Activated CD8-positive, alpha-beta T cell treated with anti-CD3 and anti-CD28 coated beads for 36 hours (primary cell): ENCODE measurements at regions of chr12 and their contacts with region 1.

Region 1: DNA sequence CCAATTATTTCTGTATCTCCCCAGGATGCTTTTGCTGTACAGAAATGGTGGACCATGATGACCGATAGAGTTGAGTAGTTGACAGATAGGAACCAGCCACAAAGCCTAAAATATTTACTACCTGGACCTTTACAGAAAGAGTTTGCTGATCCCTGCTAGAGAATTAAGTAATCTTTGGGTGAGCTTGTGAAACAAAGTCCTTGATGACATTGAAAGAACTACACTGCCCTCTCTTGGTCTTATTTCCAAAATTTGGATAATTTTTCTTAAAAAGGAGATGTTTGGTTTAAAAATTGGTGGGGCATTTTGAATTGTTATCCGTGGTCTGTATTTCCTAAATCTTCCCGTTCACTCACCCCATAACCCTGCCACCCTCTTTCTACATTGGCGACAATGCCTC is 13.7 kb upstream of the TCTN1 start:
- DNase-seq: no peak
- ATAC-seq: no peak
- H3K4me3 Mint-ChIP-seq: no peak overlapping the region
- H3K27ac Mint-ChIP-seq: no peak overlapping the region
- H3K4me1 Mint-ChIP-seq: peaks cover 7% of the 10 kb centered on the region
- H3K27me3 Mint-ChIP-seq: no peaks in the 10 kb centered on the region
- CTCF ChIP-seq: peak; percentile 61

Region 2: GRCh38 chr12:110468212-110469048 is 131.8 kb before region 1 on chr12 and contains the starts of genes FAM216A and GPN3:
- CTCF ChIA-PET with region 1: interaction called, 48 read pairs
- POLR2A ChIA-PET with region 1: no interaction called
- intact Hi-C with region 1: no loop called
- DNase-seq: peak; percentile 97
- ATAC-seq: peak; percentile 82
- H3K4me3 Mint-ChIP-seq: peak within 1 kb of the TSS; percentile 88
- H3K27ac Mint-ChIP-seq: peak within 1 kb of the TSS; percentile 99
- H3K4me1 Mint-ChIP-seq: peaks cover 43% of the 10 kb centered on the region
- H3K27me3 Mint-ChIP-seq: no peaks in the 10 kb centered on the region
- CTCF ChIP-seq: no peak
- total RNA-seq, gene FAM216A: 77.1 to 77.3 TPM
- total RNA-seq, gene GPN3: 69.1 TPM

Region 3: DNA sequence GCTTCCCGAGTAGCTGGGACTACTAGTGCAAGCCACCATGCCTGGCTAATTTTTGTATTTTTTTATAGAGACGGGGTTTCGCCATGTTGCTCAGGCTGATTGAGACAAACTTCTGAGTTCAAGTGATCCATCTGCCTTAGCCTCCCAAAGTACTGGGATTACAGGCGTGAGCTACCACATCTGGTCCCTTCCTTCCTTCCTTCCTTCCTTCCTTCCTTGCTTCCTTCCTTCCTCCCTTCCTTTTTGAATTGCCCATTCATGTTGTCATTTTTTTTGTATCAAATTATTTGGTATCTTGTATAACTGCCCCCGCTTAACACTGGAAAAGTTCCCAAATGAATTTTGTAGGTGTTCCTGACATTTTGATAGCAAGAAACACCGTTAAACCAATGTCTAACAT is 86.4 kb before region 1 on chr12:
- CTCF ChIA-PET with region 1: interaction called, 163 read pairs
- POLR2A ChIA-PET with region 1: interaction called, 3 read pairs
- intact Hi-C with region 1: loop called (anchors 2 kb)
- DNase-seq: no peak
- ATAC-seq: no peak
- H3K4me3 Mint-ChIP-seq: no peak overlapping the region
- H3K27ac Mint-ChIP-seq: no peak overlapping the region
- H3K4me1 Mint-ChIP-seq: no peaks in the 10 kb centered on the region
- H3K27me3 Mint-ChIP-seq: no peaks in the 10 kb centered on the region
- CTCF ChIP-seq: no peak

Region 4: GRCh38 chr12:110549716-110550115 is 50.5 kb before region 1 on chr12:
- CTCF ChIA-PET with region 1: interaction called, 171 read pairs
- POLR2A ChIA-PET with region 1: interaction called, 5 read pairs
- intact Hi-C with region 1: loop called (anchors 5 kb)
- DNase-seq: no peak
- ATAC-seq: no peak
- H3K4me3 Mint-ChIP-seq: no peak overlapping the region
- H3K27ac Mint-ChIP-seq: peak overlapping the region; percentile 47
- H3K4me1 Mint-ChIP-seq: peaks cover 48% of the 10 kb centered on the region
- H3K27me3 Mint-ChIP-seq: no peaks in the 10 kb centered on the region
- CTCF ChIP-seq: no peak

Region 5: GRCh38 chr12:110583137-110584059 is 16.9 kb before region 1 on chr12 and contains the start of gene PPTC7:
- CTCF ChIA-PET with region 1: interaction called, 25 read pairs
- POLR2A ChIA-PET with region 1: interaction called, 5 read pairs
- intact Hi-C with region 1: no loop called
- DNase-seq: peak; percentile 98
- ATAC-seq: peak; percentile 92
- H3K4me3 Mint-ChIP-seq: peak within 1 kb of the TSS; percentile 92
- H3K27ac Mint-ChIP-seq: peak within 1 kb of the TSS; percentile 96
- H3K4me1 Mint-ChIP-seq: peaks cover 54% of the 10 kb centered on the region
- H3K27me3 Mint-ChIP-seq: no peaks in the 10 kb centered on the region
- CTCF ChIP-seq: no peak
- total RNA-seq, gene PPTC7: 43.1 to 44.5 TPM

Region 6: GRCh38 chr12:110888256-110888991 is 288.2 kb after region 1 on chr12:
- CTCF ChIA-PET with region 1: interaction called, 16 read pairs
- POLR2A ChIA-PET with region 1: interaction called, 3 read pairs
- intact Hi-C with region 1: no loop called
- DNase-seq: no peak
- ATAC-seq: no peak
- H3K4me3 Mint-ChIP-seq: peak overlapping the region; percentile 81
- H3K27ac Mint-ChIP-seq: no peak overlapping the region
- H3K4me1 Mint-ChIP-seq: peaks cover 4% of the 10 kb centered on the region
- H3K27me3 Mint-ChIP-seq: no peaks in the 10 kb centered on the region
- CTCF ChIP-seq: peak; percentile 53